HCT116 (cell line): ENCODE measurements at regions of chr1 and their contacts with region 1.

Region 1: GRCh38 chr1:156500797-156501499 is 373 bp upstream of the MEF2D start:
- DNase-seq: peak; percentile 86
- ATAC-seq: peak; percentile 76
- H3K4me3 ChIP-seq: peak overlapping the region; percentile 89 to 97
- H3K27ac ChIP-seq: peak overlapping the region; percentile 99
- H3K4me1 ChIP-seq: peaks cover 57 to 89% of the 10 kb centered on the region in 2 experiments
- H3K27me3 ChIP-seq: no peaks in the 10 kb centered on the region
- CTCF ChIP-seq: peak in 2 of 3 experiments; percentile 54 to 59; a peak in 4 of 6 replicates
- POLR2A ChIP-seq: no peak
- RAD21 ChIP-seq: no peak

Region 2: GRCh38 chr1:156480411-156481192 is 20.3 kb before region 1 on chr1:
- CTCF ChIA-PET with region 1: interaction called, 10 read pairs
- POLR2A ChIA-PET with region 1: interaction called, 3 read pairs
- RAD21 ChIA-PET with region 1: interaction called, 3 to 4 read pairs
- intact Hi-C with region 1: no loop called
- DNase-seq: no peak
- ATAC-seq: peak; percentile 86
- H3K4me3 ChIP-seq: no peak overlapping the region
- H3K27ac ChIP-seq: no peak overlapping the region
- H3K4me1 ChIP-seq: peaks cover 0 to 11% of the 10 kb centered on the region in 2 experiments; a peak in 2 of 4 replicates
- H3K27me3 ChIP-seq: no peaks in the 10 kb centered on the region
- CTCF ChIP-seq: peak; percentile 20 to 70 (median 70); a peak in 4 of 6 replicates
- POLR2A ChIP-seq: no peak
- RAD21 ChIP-seq: peak; percentile 46; the same call in 1 of the 2 replicates

Region 3: GRCh38 chr1:156538676-156539440 is 37.9 kb after region 1 on chr1:
- CTCF ChIA-PET with region 1: no interaction called
- POLR2A ChIA-PET with region 1: no interaction called
- RAD21 ChIA-PET with region 1: no interaction called
- intact Hi-C with region 1: no loop called
- DNase-seq: no peak
- ATAC-seq: no peak
- H3K4me3 ChIP-seq: no peak overlapping the region
- H3K27ac ChIP-seq: no peak overlapping the region
- H3K4me1 ChIP-seq: no peaks in the 10 kb centered on the region
- H3K27me3 ChIP-seq: no peaks in the 10 kb centered on the region
- CTCF ChIP-seq: no peak
- POLR2A ChIP-seq: no peak
- RAD21 ChIP-seq: no peak

Region 4: DNA sequence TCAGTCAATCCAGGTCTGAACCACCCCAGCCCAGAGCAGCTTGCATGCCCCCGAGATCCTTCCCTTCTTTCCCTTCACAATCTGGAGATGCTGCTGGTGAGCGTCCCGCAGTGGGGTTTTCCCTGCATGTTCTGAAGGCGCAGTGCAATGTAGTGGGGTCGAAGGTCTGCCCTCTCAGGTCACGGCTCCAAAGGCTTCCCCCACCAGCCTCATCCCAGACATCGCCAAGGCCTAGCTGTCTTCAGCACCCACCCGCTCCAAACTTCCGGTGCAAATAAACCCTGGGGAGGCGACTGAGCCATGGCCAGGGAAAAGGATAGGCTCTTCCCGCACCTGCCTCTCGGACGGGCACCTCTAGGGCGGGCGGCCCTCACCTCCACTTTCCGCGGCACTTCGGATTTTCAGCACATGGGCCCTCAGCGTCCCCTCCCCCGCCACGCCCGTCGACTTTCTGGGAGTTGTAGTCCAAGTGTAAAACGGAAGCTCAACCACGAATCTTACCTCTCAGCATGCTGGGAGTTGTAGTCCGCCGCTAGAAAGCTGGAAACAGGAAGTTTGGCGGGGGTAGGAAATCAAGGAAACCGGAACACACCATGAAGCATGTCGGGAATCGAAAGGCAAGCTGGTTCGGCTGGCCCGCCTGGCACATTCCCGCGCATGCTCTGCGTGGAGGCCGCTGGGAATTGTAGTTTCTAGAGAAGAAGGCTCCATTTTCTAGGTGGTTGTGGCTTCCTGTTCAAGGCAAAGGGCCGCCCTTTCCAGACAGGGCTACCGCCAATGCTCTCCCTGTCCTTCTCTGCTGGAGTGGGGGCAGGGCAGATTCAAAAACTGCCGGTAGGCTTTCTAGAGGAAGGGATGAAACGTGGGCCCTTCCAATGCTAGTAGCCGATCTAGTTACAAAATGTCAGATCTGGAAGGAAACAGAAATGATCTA is 240.0 kb after region 1 on chr1 and contains the start of gene MRPL24:
- CTCF ChIA-PET with region 1: no interaction called
- POLR2A ChIA-PET with region 1: no interaction called
- RAD21 ChIA-PET with region 1: no interaction called
- intact Hi-C with region 1: loop called (anchors 10 kb)
- DNase-seq: peak; percentile 100
- ATAC-seq: peak; percentile 88
- H3K4me3 ChIP-seq: peak within 1 kb of the TSS; percentile 67 to 80
- H3K27ac ChIP-seq: peak within 1 kb of the TSS; percentile 84
- H3K4me1 ChIP-seq: peaks cover 14 to 29% of the 10 kb centered on the region in 2 experiments
- H3K27me3 ChIP-seq: no peaks in the 10 kb centered on the region
- CTCF ChIP-seq: no peak
- POLR2A ChIP-seq: peak; percentile 64
- RAD21 ChIP-seq: no peak
- total RNA-seq, gene MRPL24: 111 TPM